ENCODE measurements at regions of chr15 and their contacts with region 1.

Region 1: GRCh38 chr15:85618956-85619491 is 175.7 kb downstream of the KLHL25 start:
- DNase-seq: no peak
- ATAC-seq: peak; percentile 88
- H3K4me3 ChIP-seq: no peak overlapping the region
- H3K27ac ChIP-seq: peak overlapping the region; percentile 34; the same call in 1 of the 2 replicates
- H3K4me1 ChIP-seq: peaks cover 14% of the 10 kb centered on the region
- H3K27me3 ChIP-seq: no peaks in the 10 kb centered on the region
- CTCF ChIP-seq: no peak
- EP300 ChIP-seq: no peak
- POLR2A ChIP-seq: no peak
- RAD21 ChIP-seq: no peak

Region 2: GRCh38 chr15:85702321-85703101 is 83.5 kb after region 1 on chr15:
- CTCF ChIA-PET with region 1: interaction called, 3 read pairs
- POLR2A ChIA-PET with region 1: no interaction called
- RAD21 ChIA-PET with region 1: interaction called, 4 read pairs
- SMC1A ChIA-PET with region 1: interaction called, 14 read pairs
- in situ Hi-C with region 1: no loop called
- intact Hi-C with region 1: no loop called
- DNase-seq: no peak
- ATAC-seq: peak; percentile 42
- H3K4me3 ChIP-seq: peak overlapping the region; percentile 45; the same call in 1 of the 2 replicates
- H3K27ac ChIP-seq: peak overlapping the region; percentile 99
- H3K4me1 ChIP-seq: peaks cover 56% of the 10 kb centered on the region
- H3K27me3 ChIP-seq: no peaks in the 10 kb centered on the region
- CTCF ChIP-seq: no peak
- EP300 ChIP-seq: no peak; a peak in 1 of 4 replicates
- POLR2A ChIP-seq: 0 out of 2 replicates have a peak, but pooled peaks have one; percentile 27
- RAD21 ChIP-seq: no peak